Cardiac septum (tissue), 1 donor: ENCODE measurements at regions of chr11 and their contacts with region 1.

Region 1: GRCh38 chr11:92770419-92770818 is 199.0 kb upstream of the MTNR1B start:
- DNase-seq: no peak

Region 2: DNA sequence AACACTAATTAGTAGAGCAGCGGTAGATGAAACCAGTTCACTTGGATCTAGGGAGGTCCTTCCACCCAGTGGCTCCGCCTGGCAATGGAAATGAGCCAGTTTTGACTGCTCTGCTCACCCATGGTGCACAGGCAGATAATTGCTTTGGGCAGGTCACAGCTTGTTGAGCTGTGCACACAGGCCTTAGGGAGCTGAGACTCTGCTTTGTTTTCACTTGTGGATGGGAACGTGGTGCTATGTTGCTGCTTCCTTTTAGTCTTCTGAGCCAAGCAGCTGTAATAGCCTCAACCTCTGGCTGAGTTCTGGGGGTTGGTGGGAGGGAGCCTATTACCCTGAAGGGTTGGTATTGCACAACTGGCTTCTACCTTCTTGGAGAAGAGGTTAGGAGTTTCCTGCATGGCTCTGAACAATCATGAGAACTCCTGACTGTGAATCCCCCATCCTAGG is 63.2 kb before region 1 on chr11:
- intact Hi-C with region 1: loop called (anchors 5 kb)
- DNase-seq: no peak

Region 3: DNA sequence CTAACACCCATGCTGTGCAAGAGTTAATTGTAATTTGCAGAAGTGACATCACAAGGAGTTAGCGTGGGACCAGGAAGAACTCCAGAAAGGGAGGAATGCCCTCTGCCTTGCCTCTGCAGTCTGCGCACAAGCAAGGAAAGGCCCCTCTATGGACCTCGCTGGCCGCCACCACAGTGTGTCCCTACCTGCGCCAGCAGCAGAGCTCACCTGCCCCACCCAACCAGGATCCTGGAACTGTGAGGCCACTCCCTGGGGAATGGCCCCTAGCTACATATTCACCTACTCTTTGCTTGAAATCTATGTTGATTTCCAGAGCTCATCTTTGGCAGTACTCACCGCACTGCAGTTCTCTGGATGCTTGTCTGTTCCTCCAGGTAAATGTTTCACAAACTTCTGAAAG is 127.1 kb after region 1 on chr11:
- intact Hi-C with region 1: no loop called
- DNase-seq: no peak